ENCODE measurements at regions of chr13 and their contacts with region 1.

Region 1: DNA sequence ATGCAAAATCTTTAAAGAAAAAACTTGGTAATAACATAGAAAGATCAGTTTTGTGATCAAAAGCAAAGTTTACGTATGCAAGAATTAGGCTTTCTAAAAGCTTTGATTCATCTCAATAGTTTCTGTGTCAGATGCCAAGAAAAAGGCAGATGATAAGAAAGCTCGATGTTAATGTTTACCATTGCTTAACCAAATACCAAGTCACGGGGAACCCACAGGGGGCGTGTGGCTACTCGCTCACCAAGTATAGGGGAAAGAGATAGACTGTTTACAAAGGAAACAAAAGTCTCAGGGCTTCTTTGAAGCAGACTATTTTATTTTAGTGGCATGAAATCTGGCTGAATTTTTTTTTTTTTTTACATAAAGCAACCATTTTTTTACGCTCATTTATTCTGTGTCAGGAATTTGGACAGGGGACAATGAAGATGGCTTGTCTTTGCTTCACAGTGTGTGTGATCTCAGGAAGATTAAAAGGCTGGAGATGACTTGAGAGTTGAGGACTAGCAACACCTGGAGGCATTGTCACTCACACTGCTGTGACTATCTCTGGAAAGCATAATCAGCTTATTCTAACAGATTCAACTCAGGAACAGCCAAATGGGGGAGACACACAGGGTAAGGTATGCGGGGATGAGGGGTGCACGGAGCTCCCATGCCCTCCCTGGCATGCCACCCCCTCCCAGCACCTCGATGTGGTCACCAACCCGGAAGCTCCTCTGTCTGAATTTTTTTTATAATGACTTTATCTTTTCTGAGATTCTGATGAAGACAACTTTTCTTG is 24.9 kb downstream of the RCBTB1 start:
- DNase-seq: peak; percentile 50 to 75 (median 72)
- H3K4me3 ChIP-seq: no peak overlapping the region
- H3K27ac ChIP-seq: no peak overlapping the region
- H3K4me1 ChIP-seq: peaks cover 0 to 6% (median 2%) of the 10 kb centered on the region in 4 experiments
- H3K27me3 ChIP-seq: no peaks in the 10 kb centered on the region

Region 2: GRCh38 chr13:49265822-49266221 is 294.6 kb before region 1 on chr13:
- CTCF ChIA-PET with region 1: no interaction called
- POLR2A ChIA-PET with region 1: no interaction called
- DNase-seq: peak in 2 of 3 donors; percentile 61 to 71
- H3K4me3 ChIP-seq: peak overlapping the region in 1 of 7 experiments; percentile 30
- H3K27ac ChIP-seq: peak overlapping the region; percentile 16 to 78
- H3K4me1 ChIP-seq: peaks cover 0 to 11% (median 3%) of the 10 kb centered on the region in 4 experiments
- H3K27me3 ChIP-seq: no peaks in the 10 kb centered on the region

Region 3: GRCh38 chr13:49540552-49540951 is 19.9 kb before region 1 on chr13:
- CTCF ChIA-PET with region 1: interaction called, 12 read pairs
- POLR2A ChIA-PET with region 1: no interaction called
- DNase-seq: peak; percentile 29 to 61 (median 55)
- H3K4me3 ChIP-seq: peak overlapping the region in 6 of 7 experiments; percentile 3 to 54 (median 40)
- H3K27ac ChIP-seq: peak overlapping the region; percentile 11 to 69
- H3K4me1 ChIP-seq: peaks cover 7 to 22% (median 20%) of the 10 kb centered on the region in 4 experiments
- H3K27me3 ChIP-seq: no peaks in the 10 kb centered on the region

Region 4: DNA sequence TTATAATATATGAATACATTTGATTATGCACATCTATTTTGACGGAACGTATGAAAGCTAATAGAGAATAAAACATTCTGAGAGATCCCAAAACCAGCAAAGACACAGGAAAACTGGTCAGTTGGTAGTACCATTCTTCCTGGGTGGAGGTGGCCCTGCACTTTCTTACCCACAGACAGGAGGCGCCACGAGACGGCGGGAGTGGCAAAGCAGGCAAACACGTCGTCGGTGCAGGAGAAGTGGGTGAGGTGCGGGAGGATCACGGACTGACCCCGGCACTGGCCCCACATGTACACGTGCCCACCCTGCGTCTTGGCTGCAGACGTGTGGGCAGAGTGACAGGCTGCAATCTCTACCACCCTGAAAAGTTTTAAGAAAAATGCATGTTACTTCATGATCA is 11.2 kb before region 1 on chr13:
- CTCF ChIA-PET with region 1: interaction called, 27 read pairs
- POLR2A ChIA-PET with region 1: interaction called, 3 read pairs
- DNase-seq: no peak
- H3K4me3 ChIP-seq: no peak overlapping the region
- H3K27ac ChIP-seq: no peak overlapping the region
- H3K4me1 ChIP-seq: peaks cover 2 to 26% (median 14%) of the 10 kb centered on the region in 4 experiments
- H3K27me3 ChIP-seq: no peaks in the 10 kb centered on the region

Region 5: GRCh38 chr13:49606747-49607648 is 46.5 kb after region 1 on chr13:
- CTCF ChIA-PET with region 1: interaction called, 16 read pairs
- POLR2A ChIA-PET with region 1: interaction called, 3 read pairs
- DNase-seq: peak; percentile 89 to 93 (median 92)
- H3K4me3 ChIP-seq: peak overlapping the region in 6 of 7 experiments; percentile 41 to 81 (median 64)
- H3K27ac ChIP-seq: peak overlapping the region in 1 of 2 experiments; percentile 57
- H3K4me1 ChIP-seq: peaks cover 5 to 45% (median 21%) of the 10 kb centered on the region in 4 experiments
- H3K27me3 ChIP-seq: no peaks in the 10 kb centered on the region

Measured in common myeloid progenitor, CD34-positive (primary cell).